ENCODE measurements at regions of chr4 and their contacts with region 1.

Region 1: GRCh38 chr4:146916479-146917076 is 29.1 kb downstream of the TTC29 start:
- DNase-seq: peak; percentile 19 to 42 (median 24)
- ATAC-seq: no peak
- H3K4me3 ChIP-seq: no peak overlapping the region
- H3K27ac ChIP-seq: no peak overlapping the region
- H3K4me1 ChIP-seq: no peaks in the 10 kb centered on the region
- H3K27me3 ChIP-seq: no peaks in the 10 kb centered on the region
- CTCF ChIP-seq: peak; percentile 37 to 73 (median 47); a peak in 4 of 6 replicates
- EP300 ChIP-seq: no peak
- POLR2A ChIP-seq: no peak
- RAD21 ChIP-seq: peak; percentile 78 to 80

Region 2: DNA sequence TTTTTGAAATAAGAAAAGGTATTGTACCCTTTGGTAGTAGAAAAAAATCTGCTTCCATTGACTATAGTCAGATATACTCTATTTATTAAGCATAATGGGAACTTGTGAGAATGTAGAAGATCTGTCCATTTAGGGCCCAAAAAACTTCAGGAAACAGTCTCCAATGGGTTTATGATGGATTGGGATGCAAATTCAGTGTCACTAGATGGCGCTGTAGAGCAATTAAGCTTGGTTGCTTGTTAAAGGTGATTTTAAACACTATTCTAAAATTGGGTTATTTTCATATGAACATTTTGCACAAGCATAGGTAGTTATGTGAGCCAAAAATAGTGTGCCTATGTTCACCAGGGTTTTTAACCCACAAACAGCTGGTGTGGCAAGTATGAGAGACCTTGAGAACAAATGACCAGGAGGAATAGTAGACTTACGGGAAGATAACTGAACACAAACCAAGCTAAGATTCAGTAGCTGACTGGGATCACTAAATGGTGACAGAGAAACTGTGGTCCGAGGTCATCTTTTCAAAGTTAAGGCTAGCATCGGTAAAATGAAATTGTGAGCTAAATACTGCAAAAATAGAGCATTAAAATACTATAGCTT is 821.4 kb before region 1 on chr4:
- CTCF ChIA-PET with region 1: no interaction called
- POLR2A ChIA-PET with region 1: no interaction called
- in situ Hi-C with region 1: loop called (anchors 25 kb)
- intact Hi-C with region 1: loop called (anchors 10 kb)
- DNase-seq: peak; percentile 34 to 63 (median 44)
- ATAC-seq: peak; percentile 49; the same call in 1 of the 3 replicates
- H3K4me3 ChIP-seq: no peak overlapping the region
- H3K27ac ChIP-seq: no peak overlapping the region
- H3K4me1 ChIP-seq: no peaks in the 10 kb centered on the region
- H3K27me3 ChIP-seq: no peaks in the 10 kb centered on the region; a peak in 1 of 5 replicates
- CTCF ChIP-seq: peak; percentile 39 to 76 (median 72); a peak in 5 of 6 replicates
- EP300 ChIP-seq: no peak
- POLR2A ChIP-seq: no peak
- RAD21 ChIP-seq: peak; percentile 45 to 54

Region 3: GRCh38 chr4:146243141-146243882 is 673.3 kb before region 1 on chr4:
- CTCF ChIA-PET with region 1: no interaction called
- POLR2A ChIA-PET with region 1: no interaction called
- in situ Hi-C with region 1: no loop called
- intact Hi-C with region 1: loop called (anchors 1 kb)
- DNase-seq: peak; percentile 37 to 72 (median 62)
- ATAC-seq: peak; percentile 84
- H3K4me3 ChIP-seq: no peak overlapping the region
- H3K27ac ChIP-seq: no peak overlapping the region
- H3K4me1 ChIP-seq: peaks cover 0 to 7% of the 10 kb centered on the region in 2 experiments; a peak in 1 of 5 replicates
- H3K27me3 ChIP-seq: peaks cover 0 to 32% of the 10 kb centered on the region in 2 experiments; a peak in 2 of 5 replicates
- CTCF ChIP-seq: peak; percentile 44 to 67 (median 59)
- EP300 ChIP-seq: no peak
- POLR2A ChIP-seq: no peak
- RAD21 ChIP-seq: 0 out of 4 replicates have a peak, but pooled peaks of 1 of the 2 experiments have one; percentile 12

Region 4: DNA sequence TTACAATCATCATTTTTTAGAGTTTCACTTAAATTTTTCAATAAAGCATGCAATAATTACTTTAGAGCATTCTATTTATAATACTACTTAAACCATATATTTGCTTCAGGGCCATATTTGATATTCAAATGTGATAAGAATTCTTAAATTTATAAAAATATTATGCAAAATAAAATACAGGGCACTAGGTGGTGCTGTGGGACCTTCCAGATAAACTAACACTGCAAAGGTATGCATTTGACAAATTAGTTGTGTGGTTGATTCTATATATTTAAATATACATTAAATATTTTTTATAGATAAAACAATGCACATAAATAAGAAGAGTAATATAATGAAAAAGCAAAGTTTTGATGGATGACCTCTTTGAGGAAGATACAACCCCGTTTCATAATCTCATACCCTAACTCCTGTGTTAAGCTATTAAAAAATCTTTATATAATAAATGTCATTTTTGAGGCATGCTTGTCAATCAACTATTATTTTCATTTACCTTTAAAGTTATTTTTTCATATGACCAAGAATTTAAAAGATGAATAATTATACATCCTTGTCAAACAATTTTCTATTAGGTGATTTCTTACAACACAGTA is 573.9 kb before region 1 on chr4:
- CTCF ChIA-PET with region 1: interaction called, 18 read pairs
- POLR2A ChIA-PET with region 1: no interaction called
- in situ Hi-C with region 1: loop called (anchors 10 kb)
- intact Hi-C with region 1: loop called (anchors 1 kb)
- DNase-seq: peak; percentile 20 to 54 (median 26)
- ATAC-seq: peak; percentile 48; the same call in 2 of the 3 replicates
- H3K4me3 ChIP-seq: no peak overlapping the region
- H3K27ac ChIP-seq: no peak overlapping the region
- H3K4me1 ChIP-seq: peaks cover 0 to 3% of the 10 kb centered on the region in 2 experiments; a peak in 1 of 5 replicates
- H3K27me3 ChIP-seq: no peaks in the 10 kb centered on the region
- CTCF ChIP-seq: peak in 2 of 3 experiments; percentile 36 to 74; a peak in 3 of 6 replicates
- EP300 ChIP-seq: no peak
- POLR2A ChIP-seq: no peak
- RAD21 ChIP-seq: peak; percentile 50 to 72